ENCODE measurements at regions of chr20 and their contacts with region 1.

Region 1: DNA sequence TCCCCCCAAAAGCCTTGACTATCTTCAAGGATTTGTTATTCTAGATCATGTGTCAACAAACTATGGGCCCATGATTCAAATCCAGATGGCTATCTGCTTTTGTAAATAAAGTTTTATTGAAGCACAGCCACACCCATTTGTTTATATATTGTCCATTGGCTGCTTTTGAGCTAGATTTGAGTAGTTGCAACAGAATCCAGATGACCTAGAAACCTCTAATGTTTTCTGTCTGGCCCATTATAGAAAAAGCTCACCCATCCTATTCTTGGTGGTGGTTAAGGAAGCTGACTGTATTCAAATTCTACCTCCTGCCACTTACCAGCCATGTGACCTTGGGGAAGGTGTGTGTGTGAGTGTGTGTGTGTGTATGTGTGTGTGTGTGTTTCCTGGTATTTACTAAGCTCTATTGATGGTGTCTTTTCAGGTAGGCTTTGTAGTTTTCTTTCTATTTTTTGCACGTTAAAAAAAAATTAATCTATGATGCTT is 1.3 kb upstream of the GTSF1L start:
- DNase-seq: no peak
- ATAC-seq: peak; percentile 34
- H3K4me3 Mint-ChIP-seq: no peak overlapping the region
- H3K27ac Mint-ChIP-seq: no peak overlapping the region
- H3K4me1 Mint-ChIP-seq: peaks cover 38% of the 10 kb centered on the region
- H3K27me3 Mint-ChIP-seq: no peaks in the 10 kb centered on the region
- CTCF ChIP-seq: no peak

Region 2: DNA sequence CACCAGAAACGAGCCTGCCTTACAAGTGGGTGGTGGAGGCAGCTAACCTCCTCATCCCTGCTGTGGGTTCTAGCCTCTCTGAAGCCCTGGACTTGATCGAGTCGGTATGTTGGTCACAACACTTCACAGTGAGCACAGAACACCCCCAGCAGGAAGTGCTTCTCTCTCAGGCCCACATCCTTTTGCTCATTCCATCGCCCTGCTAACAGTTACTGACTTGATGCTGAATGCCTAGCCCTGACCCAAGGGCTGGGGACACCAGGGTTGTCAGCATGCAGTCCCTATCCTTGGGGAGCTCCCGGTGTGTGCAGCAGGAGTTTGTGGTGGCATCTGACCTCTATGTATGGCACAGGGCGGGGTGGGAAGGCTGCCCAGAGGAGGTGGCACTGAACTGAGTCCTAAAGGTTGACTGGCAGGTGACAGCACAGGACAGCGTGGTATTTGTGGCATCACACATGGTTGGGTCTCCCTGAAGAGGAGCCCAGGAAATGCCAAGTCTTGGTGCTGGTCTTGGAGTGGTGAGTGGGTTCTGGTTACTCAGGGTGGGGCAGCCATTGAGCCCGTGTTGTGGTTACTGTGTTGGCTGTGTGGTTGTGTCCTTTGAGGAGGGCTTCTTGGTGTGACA is 28.0 kb before region 1 on chr20:
- CTCF ChIA-PET with region 1: no interaction called
- POLR2A ChIA-PET with region 1: interaction called, 10 read pairs
- intact Hi-C with region 1: no loop called
- DNase-seq: no peak
- ATAC-seq: no peak
- H3K4me3 Mint-ChIP-seq: no peak overlapping the region
- H3K27ac Mint-ChIP-seq: no peak overlapping the region
- H3K4me1 Mint-ChIP-seq: no peaks in the 10 kb centered on the region
- H3K27me3 Mint-ChIP-seq: no peaks in the 10 kb centered on the region
- CTCF ChIP-seq: no peak

Measured in activated B cell treated with CpG ODN at 0.5 μM for 24 hours (primary cell).